ENCODE measurements at regions of chr5 and their contacts with region 1.

Region 1: GRCh38 chr5:170782438-170782837 is 1.1 kb upstream of the GABRP start:
- DNase-seq: peak; percentile 32
- H3K4me3 Mint-ChIP-seq: no peak overlapping the region
- H3K27ac Mint-ChIP-seq: no peak overlapping the region
- H3K4me1 Mint-ChIP-seq: no peaks in the 10 kb centered on the region
- H3K27me3 Mint-ChIP-seq: no peaks in the 10 kb centered on the region
- CTCF ChIP-seq: no peak

Region 2: GRCh38 chr5:170769246-170769645 is 13.2 kb before region 1 on chr5:
- CTCF ChIA-PET with region 1: interaction called, 10 read pairs
- POLR2A ChIA-PET with region 1: interaction called, 3 read pairs
- intact Hi-C with region 1: no loop called
- DNase-seq: no peak
- H3K4me3 Mint-ChIP-seq: no peak overlapping the region
- H3K27ac Mint-ChIP-seq: no peak overlapping the region
- H3K4me1 Mint-ChIP-seq: peaks cover 5% of the 10 kb centered on the region
- H3K27me3 Mint-ChIP-seq: no peaks in the 10 kb centered on the region
- CTCF ChIP-seq: no peak

Measured in MCF 10A (cell line).